ENCODE measurements at regions of chr9 and their contacts with region 1.

Region 1: GRCh38 chr9:96441798-96442445 is 8.0 kb upstream of the HABP4 start:
- DNase-seq: peak; percentile 42 to 71
- H3K4me3 ChIP-seq: no peak overlapping the region
- H3K4me3 Mint-ChIP-seq: no peak overlapping the region
- H3K27ac Mint-ChIP-seq: no peak overlapping the region
- H3K4me1 ChIP-seq: no peaks in the 10 kb centered on the region
- H3K4me1 Mint-ChIP-seq: no peaks in the 10 kb centered on the region
- H3K27me3 ChIP-seq: no peaks in the 10 kb centered on the region
- H3K27me3 Mint-ChIP-seq: no peaks in the 10 kb centered on the region
- CTCF ChIP-seq: peak; percentile 63 to 64

Region 2: DNA sequence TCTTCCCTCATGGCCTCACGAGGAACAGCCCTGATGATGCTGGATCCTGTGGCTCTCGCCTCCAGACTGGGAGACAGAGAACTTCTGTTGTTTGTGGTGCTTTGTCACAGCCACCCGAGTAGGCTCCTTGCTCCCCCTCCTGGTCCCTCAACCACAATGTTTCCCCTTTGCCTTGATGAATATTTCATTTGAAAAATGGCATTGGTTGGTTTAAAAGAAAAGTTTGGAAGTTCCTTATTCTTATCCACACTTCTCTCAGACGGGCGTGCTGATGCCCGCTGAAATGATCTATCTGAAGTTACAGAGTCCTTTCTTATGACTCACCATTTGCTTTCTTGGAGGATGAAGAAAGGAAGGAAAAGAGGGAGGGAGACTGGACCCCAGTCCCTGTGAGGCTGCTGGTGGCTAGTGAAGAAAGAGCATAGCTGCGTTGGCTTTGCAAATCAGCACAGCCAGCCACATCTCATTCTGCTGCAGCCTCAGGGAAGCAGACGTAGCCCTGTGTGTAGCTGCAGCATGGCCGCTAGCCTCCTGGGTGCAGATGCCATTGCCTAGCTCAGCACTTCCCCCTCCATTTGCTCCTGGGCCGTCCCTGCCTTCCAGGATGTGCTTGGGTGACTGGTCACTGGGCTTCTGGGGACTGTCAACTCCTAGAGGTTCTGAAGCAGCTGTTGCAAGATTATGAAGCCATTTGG is 380.5 kb before region 1 on chr9:
- CTCF ChIA-PET with region 1: no interaction called
- POLR2A ChIA-PET with region 1: no interaction called
- intact Hi-C with region 1: no loop called
- DNase-seq: peak in 1 of 2 experiments; percentile 43
- H3K4me3 ChIP-seq: no peak overlapping the region
- H3K4me3 Mint-ChIP-seq: no peak overlapping the region
- H3K27ac Mint-ChIP-seq: no peak overlapping the region
- H3K4me1 ChIP-seq: peaks cover 18% of the 10 kb centered on the region
- H3K4me1 Mint-ChIP-seq: peaks cover 8% of the 10 kb centered on the region
- H3K27me3 ChIP-seq: no peaks in the 10 kb centered on the region
- H3K27me3 Mint-ChIP-seq: no peaks in the 10 kb centered on the region
- CTCF ChIP-seq: peak in 1 of 2 experiments; percentile 47

Region 3: GRCh38 chr9:96654443-96655197 is 212.7 kb after region 1 on chr9:
- CTCF ChIA-PET with region 1: no interaction called
- POLR2A ChIA-PET with region 1: no interaction called
- intact Hi-C with region 1: loop called (anchors 5 kb)
- DNase-seq: peak; percentile 73 to 77
- H3K4me3 ChIP-seq: peak overlapping the region; percentile 91
- H3K4me3 Mint-ChIP-seq: peak overlapping the region; percentile 87
- H3K27ac Mint-ChIP-seq: peak overlapping the region; percentile 88
- H3K4me1 ChIP-seq: peaks cover 4% of the 10 kb centered on the region; the same call in 1 of the 2 replicates
- H3K4me1 Mint-ChIP-seq: peaks cover 25% of the 10 kb centered on the region
- H3K27me3 ChIP-seq: no peaks in the 10 kb centered on the region
- H3K27me3 Mint-ChIP-seq: no peaks in the 10 kb centered on the region
- CTCF ChIP-seq: no peak

Region 4: GRCh38 chr9:96667361-96667728 is 225.4 kb after region 1 on chr9:
- CTCF ChIA-PET with region 1: interaction called, 16 read pairs
- POLR2A ChIA-PET with region 1: no interaction called
- intact Hi-C with region 1: loop called (anchors 1 kb)
- DNase-seq: no peak
- H3K4me3 ChIP-seq: no peak overlapping the region
- H3K4me3 Mint-ChIP-seq: no peak overlapping the region
- H3K27ac Mint-ChIP-seq: no peak overlapping the region
- H3K4me1 ChIP-seq: no peaks in the 10 kb centered on the region
- H3K4me1 Mint-ChIP-seq: peaks cover 6% of the 10 kb centered on the region
- H3K27me3 ChIP-seq: no peaks in the 10 kb centered on the region
- H3K27me3 Mint-ChIP-seq: no peaks in the 10 kb centered on the region
- CTCF ChIP-seq: no peak

Measured in Caco-2 (cell line).